ENCODE measurements at regions of chr14 and their contacts with region 1.

Region 1: GRCh38 chr14:73458151-73458976 is at the start of gene NUMB:
- DNase-seq: peak; percentile 74
- ATAC-seq: peak; percentile 97
- H3K4me3 Mint-ChIP-seq: peak within 1 kb of the TSS; percentile 96
- H3K27ac Mint-ChIP-seq: peak within 1 kb of the TSS; percentile 92
- H3K4me1 Mint-ChIP-seq: peaks cover 52% of the 10 kb centered on the region
- H3K27me3 Mint-ChIP-seq: no peaks in the 10 kb centered on the region
- CTCF ChIP-seq: no peak
- total RNA-seq, gene NUMB: 69.5 and 71.4 TPM in 2 replicates

Region 2: DNA sequence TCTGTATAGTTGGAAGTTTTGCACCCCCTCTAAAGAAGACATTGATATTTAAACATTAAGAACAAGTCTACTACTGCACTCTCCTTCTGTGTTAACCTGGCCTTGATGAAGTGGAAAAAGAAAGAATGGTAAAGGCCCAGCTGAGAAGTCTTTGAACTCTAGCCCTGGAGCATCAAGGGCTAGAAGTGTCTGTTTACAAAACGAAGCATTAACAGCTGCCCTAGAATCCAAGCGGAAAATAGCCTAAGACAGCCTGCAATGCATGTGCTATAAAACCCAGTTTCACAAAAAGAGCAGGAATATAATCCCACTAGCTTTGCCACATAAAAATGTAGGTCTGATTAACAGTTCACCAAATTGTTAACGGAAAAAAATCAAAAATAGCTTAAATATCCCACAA is 60.6 kb before region 1 on chr14:
- CTCF ChIA-PET with region 1: interaction called, 4 read pairs
- POLR2A ChIA-PET with region 1: interaction called, 3 read pairs
- intact Hi-C with region 1: loop called (anchors 2 kb)
- DNase-seq: no peak
- ATAC-seq: no peak
- H3K4me3 Mint-ChIP-seq: no peak overlapping the region
- H3K27ac Mint-ChIP-seq: no peak overlapping the region
- H3K4me1 Mint-ChIP-seq: peaks cover 63% of the 10 kb centered on the region
- H3K27me3 Mint-ChIP-seq: no peaks in the 10 kb centered on the region
- CTCF ChIP-seq: no peak

Region 3: GRCh38 chr14:73443758-73444157 is 14.6 kb before region 1 on chr14:
- CTCF ChIA-PET with region 1: no interaction called
- POLR2A ChIA-PET with region 1: interaction called, 4 read pairs
- intact Hi-C with region 1: loop called (anchors 2 kb)
- DNase-seq: no peak
- ATAC-seq: no peak
- H3K4me3 Mint-ChIP-seq: no peak overlapping the region
- H3K27ac Mint-ChIP-seq: no peak overlapping the region
- H3K4me1 Mint-ChIP-seq: peaks cover 12% of the 10 kb centered on the region
- H3K27me3 Mint-ChIP-seq: no peaks in the 10 kb centered on the region
- CTCF ChIP-seq: no peak

Region 4: GRCh38 chr14:73620268-73620667 is 161.9 kb after region 1 on chr14:
- CTCF ChIA-PET with region 1: no interaction called
- POLR2A ChIA-PET with region 1: no interaction called
- intact Hi-C with region 1: no loop called
- DNase-seq: no peak
- ATAC-seq: no peak
- H3K4me3 Mint-ChIP-seq: no peak overlapping the region
- H3K27ac Mint-ChIP-seq: no peak overlapping the region
- H3K4me1 Mint-ChIP-seq: no peaks in the 10 kb centered on the region
- H3K27me3 Mint-ChIP-seq: no peaks in the 10 kb centered on the region
- CTCF ChIP-seq: no peak

Measured in activated B cell treated with CpG ODN at 0.5 μM for 24 hours (primary cell).